ENCODE measurements at regions of chr17 and their contacts with region 1.

Region 1: DNA sequence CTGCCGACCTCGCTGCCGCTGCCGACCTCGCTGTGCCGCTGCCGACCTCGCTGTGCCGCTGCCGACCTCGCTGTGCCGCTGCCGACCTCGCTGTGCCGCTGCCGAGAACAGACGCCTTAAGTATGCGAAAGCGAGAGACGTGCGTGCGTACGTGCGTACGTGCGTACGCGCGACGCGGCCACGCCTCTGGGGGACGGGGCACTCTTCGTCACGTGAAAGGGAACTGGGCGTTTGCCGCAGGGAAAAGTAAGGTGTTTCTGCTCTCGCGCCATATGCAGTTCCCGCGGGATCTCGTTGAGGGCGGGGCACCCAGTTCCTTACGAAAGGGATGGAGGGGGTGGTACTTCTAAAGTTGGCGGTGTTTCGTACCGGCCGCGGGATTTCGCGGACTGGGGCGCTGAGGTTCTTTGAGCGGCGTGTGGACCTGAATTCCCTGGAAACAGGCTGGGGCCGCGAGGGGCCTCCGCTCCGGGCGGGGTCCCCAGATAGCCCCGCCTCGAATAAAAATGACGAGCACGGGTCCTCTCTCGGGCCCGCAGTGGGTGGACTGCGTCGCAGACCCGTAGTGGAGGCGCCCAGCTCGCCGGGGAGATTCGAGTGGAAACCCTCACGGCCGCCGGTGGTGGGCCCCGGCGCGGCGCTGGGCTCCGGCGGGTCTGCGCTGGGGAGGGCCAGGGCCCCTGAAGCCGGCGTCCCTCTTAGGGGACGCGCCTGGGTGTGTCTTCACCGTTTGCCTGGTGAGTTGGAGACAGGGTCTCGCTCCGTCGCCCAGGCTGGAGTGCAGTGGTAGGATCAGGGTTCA is at the start of gene EIF4A3:
- DNase-seq: peak; percentile 99
- ATAC-seq: peak; percentile 97
- H3K4me3 ChIP-seq: peak within 1 kb of the TSS; percentile 72 to 79
- H3K27ac ChIP-seq: peak within 1 kb of the TSS; percentile 2 to 25
- H3K4me1 ChIP-seq: peaks cover 0 to 2% of the 10 kb centered on the region in 2 donors
- H3K27me3 ChIP-seq: no peaks in the 10 kb centered on the region
- total RNA-seq, gene EIF4A3: 44.6 to 65.8 TPM

Region 2: DNA sequence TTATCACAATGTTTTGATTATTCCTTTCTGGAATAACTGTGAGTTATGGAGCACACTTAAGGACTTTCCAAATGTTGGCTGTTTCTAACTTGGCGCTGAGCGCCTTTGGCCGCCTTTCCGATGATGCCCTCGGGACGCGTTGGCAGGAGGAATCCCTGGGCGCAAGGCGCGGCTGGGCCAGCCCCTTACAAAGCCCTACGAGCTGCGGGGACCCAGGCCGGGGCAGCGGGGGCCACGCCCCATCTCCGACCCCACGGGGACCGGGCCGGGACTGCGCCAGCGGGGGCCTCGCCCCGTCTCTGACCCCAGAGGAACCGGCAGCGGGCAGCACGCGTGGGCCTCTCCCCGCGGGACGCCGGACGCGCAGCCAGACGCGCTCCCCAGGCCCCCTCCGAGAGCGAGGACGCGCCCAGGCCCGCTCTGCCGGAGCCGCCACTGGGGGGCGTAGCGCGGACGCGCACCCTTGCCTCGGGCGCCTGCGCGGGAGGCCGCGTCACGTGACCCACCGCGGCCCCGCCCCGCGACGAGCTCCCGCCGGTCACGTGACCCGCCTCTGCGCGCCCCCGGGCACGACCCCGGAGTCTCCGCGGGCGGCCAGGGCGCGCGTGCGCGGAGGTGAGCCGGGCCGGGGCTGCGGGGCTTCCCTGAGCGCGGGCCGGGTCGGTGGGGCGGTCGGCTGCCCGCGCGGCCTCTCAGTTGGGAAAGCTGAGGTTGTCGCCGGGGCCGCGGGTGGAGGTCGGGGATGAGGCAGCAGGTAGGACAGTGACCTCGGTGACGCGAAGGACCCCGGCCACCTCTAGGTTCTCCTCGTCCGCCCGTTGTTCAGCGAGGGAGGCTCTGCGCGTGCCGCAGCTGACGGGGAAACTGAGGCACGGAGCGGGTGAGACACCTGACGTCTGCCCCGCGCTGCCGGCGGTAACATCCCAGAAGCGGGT is 46.0 kb before region 1 on chr17 and contains the start of gene GAA:
- intact Hi-C with region 1: loop called in 1 of 2 experiments (anchors 5 kb)
- DNase-seq: peak; percentile 90 to 95
- ATAC-seq: peak; percentile 92
- H3K4me3 ChIP-seq: peak within 1 kb of the TSS; percentile 63 to 66
- H3K27ac ChIP-seq: peak within 1 kb of the TSS in 1 of 2 donors; percentile 18
- H3K4me1 ChIP-seq: no peaks in the 10 kb centered on the region
- H3K27me3 ChIP-seq: no peaks in the 10 kb centered on the region
- total RNA-seq, gene GAA: 48.0 to 82.2 TPM

Region 3: DNA sequence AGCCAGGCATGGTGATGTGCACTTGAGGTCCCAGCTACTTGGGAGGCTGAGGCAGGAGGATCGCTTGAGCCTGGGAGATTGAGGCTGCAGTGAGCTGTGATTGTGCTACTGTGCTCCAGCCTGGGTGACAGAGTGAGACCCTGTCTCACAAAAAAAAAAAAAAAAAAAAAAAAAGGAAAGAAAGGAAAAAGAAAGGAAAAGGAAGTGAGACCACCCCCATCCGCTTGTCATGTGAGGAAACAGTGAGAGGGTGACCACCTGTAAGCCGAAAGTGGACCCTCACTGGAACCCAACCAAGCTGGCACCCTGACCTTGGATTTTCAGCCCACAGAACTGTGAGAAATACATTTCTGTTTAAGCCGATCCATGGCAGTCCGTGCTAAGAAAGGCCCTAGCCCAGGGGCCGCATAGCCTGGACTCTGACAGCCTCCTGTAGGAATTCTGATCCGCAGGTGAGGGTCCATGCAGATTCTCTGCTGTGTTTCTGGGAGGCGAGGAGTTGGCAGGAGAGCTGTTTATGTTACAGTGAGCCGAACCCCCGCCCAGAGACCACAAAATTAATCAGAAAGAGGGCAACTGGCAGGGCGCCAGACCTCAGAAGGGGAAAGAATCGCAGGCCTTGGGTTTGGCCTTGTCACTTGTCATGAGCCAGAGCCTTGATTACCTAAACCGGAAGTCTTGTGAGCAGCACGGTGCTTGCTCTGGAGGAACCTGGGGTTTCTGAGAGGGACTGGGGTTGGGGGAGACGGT is 72.0 kb after region 1 on chr17:
- intact Hi-C with region 1: no loop called
- DNase-seq: peak; percentile 91 to 92
- ATAC-seq: peak; percentile 29
- H3K4me3 ChIP-seq: peak overlapping the region; percentile 65 to 97
- H3K27ac ChIP-seq: peak overlapping the region in 1 of 2 donors; percentile 19
- H3K4me1 ChIP-seq: no peaks in the 10 kb centered on the region
- H3K27me3 ChIP-seq: no peaks in the 10 kb centered on the region

Region 4: DNA sequence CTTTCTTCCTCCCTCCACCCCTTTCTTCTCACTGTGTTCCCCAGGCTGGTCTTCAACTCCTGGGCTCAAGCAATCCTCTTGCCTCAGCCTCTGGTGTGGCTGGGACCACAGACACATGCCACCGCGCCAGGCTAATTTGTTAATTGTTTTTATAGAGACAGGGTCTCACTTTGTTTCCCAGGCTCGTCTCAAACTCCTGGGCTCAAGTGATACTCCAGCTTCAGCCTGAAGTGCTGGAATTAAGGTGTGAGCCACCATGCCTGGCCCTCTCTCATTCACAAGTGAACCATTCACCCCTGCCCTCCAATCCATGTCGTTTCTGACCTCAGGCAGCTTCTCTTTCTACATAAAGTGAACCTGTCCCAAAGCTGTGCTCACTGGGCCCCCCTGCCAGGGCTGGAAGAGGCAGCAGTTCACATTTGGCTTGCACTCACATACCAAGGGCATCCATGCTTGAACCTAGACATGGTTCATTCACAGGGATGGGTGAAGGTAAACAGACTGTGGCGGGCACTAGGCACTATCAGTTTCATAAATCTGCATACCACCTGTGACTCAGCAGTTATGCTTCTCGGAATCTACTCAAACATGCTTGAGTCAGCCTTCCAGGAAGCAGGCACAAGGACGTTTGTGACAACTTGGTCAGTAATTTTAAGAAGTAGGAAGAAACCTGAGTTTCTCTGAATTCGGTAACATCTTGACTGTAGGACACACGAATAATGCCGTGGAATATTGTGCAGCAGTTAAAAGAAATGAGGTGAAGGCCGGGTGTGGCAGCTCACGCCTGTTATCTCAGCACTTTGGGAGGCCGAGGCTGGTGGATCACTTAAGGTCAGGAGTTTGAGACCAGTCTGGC is 107.4 kb after region 1 on chr17:
- intact Hi-C with region 1: loop called in 1 of 2 experiments (anchors 10 kb)
- DNase-seq: peak in 1 of 2 donors; percentile 65
- ATAC-seq: peak; percentile 73
- H3K4me3 ChIP-seq: no peak overlapping the region
- H3K27ac ChIP-seq: peak overlapping the region in 1 of 2 donors; percentile 94
- H3K4me1 ChIP-seq: no peaks in the 10 kb centered on the region
- H3K27me3 ChIP-seq: no peaks in the 10 kb centered on the region